Activated naive CD4-positive, alpha-beta T cell treated with anti-CD3 and anti-CD28 coated beads for 36 hours (primary cell): ENCODE measurements at regions of chr22 and their contacts with region 1.

Region 1: DNA sequence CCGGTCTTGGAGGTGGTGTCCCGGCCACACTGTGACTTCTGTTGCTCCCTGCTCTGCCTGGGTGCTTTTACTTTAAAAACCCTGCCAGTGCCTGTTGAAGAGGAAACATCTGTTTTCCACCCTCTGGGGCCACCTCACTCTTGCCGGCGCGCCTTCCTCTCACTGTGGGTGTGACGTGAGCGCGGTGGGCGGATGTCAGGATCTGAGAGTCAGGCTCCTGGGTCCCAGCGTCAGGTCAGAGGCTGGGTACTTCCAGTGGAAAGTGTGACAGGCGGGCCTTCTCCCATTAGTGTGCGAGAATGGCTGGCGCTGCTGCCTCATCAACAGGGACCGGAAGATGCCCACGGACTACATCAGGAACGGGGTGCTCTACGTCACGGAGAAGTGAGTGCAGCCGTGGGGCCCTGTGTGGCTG is 54.2 kb downstream of the GRAMD4 start:
- DNase-seq: peak; percentile 100
- H3K4me3 Mint-ChIP-seq: peak overlapping the region; percentile 80
- H3K27ac Mint-ChIP-seq: peak overlapping the region; percentile 93
- H3K4me1 Mint-ChIP-seq: peaks cover 54% of the 10 kb centered on the region
- H3K27me3 Mint-ChIP-seq: no peaks in the 10 kb centered on the region

Region 2: DNA sequence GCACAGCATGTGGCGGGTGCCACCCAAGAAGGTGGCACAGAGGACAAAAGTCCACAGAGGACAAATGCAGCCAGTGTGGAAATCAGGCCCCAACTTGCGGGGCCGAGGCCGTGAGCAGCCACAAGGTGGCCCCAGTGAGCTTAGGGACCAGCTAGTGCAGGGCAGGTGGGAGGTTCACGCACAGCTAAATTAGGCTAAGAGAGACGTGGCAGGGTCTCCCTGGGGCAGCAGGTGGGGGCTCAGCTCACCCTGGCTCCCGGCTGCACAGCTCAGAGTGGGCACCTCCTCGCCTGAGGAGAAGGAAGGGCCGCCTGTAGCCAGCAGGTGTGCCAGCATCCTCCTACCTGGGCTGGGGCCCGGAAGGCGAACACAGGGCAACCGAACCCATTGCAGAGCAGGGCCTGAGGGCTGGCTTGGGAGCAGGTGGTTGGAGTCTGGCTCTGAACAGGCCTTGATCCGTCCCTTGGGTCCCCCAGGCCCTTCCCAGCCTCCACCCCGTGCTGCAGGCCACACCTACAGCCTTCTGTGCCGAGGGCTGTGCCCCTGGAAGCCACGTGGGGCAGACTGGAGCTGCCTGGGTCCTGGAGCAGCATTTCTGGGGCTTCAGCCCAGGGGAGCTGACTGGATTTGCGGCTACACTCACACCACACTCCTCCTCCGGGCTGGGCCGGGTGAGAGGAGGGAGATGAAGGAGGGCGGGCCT is 110.8 kb before region 1 on chr22:
- CTCF ChIA-PET with region 1: interaction called, 6 read pairs
- intact Hi-C with region 1: loop called (anchors 2 kb)
- DNase-seq: peak; percentile 88
- H3K4me3 Mint-ChIP-seq: peak overlapping the region; percentile 13
- H3K27ac Mint-ChIP-seq: no peak overlapping the region
- H3K4me1 Mint-ChIP-seq: peaks cover 7% of the 10 kb centered on the region
- H3K27me3 Mint-ChIP-seq: no peaks in the 10 kb centered on the region

Region 3: GRCh38 chr22:46604306-46604690 is 70.1 kb before region 1 on chr22:
- CTCF ChIA-PET with region 1: no interaction called
- intact Hi-C with region 1: loop called (anchors 1 kb)
- DNase-seq: peak; percentile 94
- H3K4me3 Mint-ChIP-seq: peak overlapping the region; percentile 67
- H3K27ac Mint-ChIP-seq: peak overlapping the region; percentile 95
- H3K4me1 Mint-ChIP-seq: peaks cover 15% of the 10 kb centered on the region
- H3K27me3 Mint-ChIP-seq: no peaks in the 10 kb centered on the region

Region 4: GRCh38 chr22:46652847-46653331 is 21.5 kb before region 1 on chr22:
- CTCF ChIA-PET with region 1: no interaction called
- intact Hi-C with region 1: loop called (anchors 1 kb)
- DNase-seq: no peak
- H3K4me3 Mint-ChIP-seq: no peak overlapping the region
- H3K27ac Mint-ChIP-seq: peak overlapping the region; percentile 4
- H3K4me1 Mint-ChIP-seq: peaks cover 24% of the 10 kb centered on the region
- H3K27me3 Mint-ChIP-seq: no peaks in the 10 kb centered on the region

Region 5: GRCh38 chr22:46737976-46738646 is 63.7 kb after region 1 on chr22 and contains the start of gene CERK:
- CTCF ChIA-PET with region 1: no interaction called
- intact Hi-C with region 1: loop called (anchors 1 kb)
- DNase-seq: peak; percentile 72
- H3K4me3 Mint-ChIP-seq: peak within 1 kb of the TSS; percentile 100
- H3K27ac Mint-ChIP-seq: peak within 1 kb of the TSS; percentile 99
- H3K4me1 Mint-ChIP-seq: peaks cover 40% of the 10 kb centered on the region
- H3K27me3 Mint-ChIP-seq: no peaks in the 10 kb centered on the region
- total RNA-seq, gene CERK: 32.6 to 34.9 TPM